ENCODE measurements at regions of chr3 and their contacts with region 1.

Region 1: DNA sequence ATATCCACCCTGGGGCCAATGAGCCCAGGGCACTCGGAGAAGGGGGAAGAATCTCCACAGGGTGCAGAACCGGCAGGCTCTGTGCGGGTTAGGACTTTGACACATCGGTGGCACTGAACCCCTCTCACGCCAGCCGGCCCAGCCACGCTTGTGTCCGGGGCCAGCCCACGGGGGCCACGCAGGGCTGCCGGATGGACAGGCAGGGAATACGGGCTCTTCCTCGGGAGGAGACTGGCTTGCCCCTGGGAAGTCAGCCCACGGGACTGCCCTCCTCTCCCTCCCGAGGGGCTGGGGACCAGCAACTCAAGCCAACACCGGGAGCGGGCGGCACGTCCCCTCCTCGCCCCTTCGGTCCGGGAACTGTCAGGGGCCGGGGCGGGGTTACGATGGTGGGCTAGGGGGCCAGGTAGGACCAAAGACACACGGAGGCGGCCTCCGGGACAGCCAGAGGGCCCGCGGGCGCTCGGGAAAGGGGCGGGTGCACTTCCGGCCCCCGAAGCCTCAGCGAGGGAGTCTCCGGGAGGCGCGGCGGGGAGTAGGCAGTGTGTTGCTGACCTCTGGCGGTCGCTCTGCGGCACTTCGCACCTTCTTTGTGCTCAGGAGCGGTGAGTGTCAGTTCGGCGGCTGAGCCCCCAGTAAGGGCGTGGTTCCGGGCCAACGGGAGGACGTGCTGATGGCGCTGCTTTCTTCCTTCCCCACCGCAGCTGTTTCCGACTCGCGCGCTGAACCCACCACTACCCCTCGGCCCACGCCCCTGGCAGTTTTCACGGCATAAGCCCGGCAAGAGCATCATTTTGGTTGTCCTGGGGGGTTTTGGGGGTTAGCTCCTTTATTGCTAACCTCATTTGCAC is 5.1 kb upstream of the CYP8B1 start:
- DNase-seq: peak; percentile 93
- H3K4me3 ChIP-seq: peak overlapping the region; percentile 63 to 75 (median 68)
- H3K27ac ChIP-seq: peak overlapping the region; percentile 67 to 80 (median 79)
- H3K4me1 ChIP-seq: peaks cover 0 to 13% (median 8%) of the 10 kb centered on the region in 4 donors
- H3K27me3 ChIP-seq: no peaks in the 10 kb centered on the region
- CTCF ChIP-seq: peak; percentile 78 to 90 (median 86)
- EP300 ChIP-seq: no peak
- POLR2A ChIP-seq: no peak

Region 2: DNA sequence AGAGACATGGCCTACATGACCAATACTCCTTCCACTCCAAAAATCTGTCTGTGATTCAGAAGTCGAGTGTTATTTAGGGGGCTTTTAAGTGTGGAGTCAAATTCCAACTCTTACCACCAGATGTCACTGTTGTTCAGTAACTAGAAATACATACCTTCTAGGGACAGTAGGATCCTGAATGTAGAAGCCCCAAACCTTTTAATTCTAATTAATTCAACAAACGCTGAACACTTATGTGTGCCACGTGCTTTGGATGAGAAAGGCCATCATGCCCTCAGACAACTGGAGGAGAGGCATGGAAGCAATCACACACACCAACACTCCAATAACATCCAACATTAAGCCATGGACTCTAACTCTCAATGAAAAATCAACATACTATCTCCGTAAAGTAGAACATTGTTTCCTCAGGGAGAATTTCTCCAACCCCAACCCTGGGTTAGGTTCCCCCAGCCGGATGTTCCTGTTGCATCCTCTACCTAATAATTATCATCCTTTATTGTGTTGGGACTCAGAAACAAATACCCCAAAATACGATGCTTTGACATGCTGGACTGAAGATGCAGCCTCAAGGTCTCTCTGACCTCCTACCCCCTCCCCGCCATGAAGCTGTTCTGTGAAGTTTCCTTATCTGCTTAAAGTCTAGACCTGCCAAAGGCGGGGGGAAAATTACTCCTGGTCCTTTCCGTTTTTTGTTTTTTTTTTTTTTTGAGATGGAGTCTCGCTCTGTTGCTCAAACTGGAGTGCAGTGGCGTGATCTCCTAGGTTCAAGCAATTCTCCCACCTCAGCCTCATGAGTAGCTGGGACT is 99.7 kb before region 1 on chr3:
- intact Hi-C with region 1: loop called (anchors 1 kb)
- DNase-seq: no peak
- H3K4me3 ChIP-seq: no peak overlapping the region
- H3K27ac ChIP-seq: peak overlapping the region in 3 of 4 donors; percentile 37 to 70 (median 45)
- H3K4me1 ChIP-seq: peaks cover 0 to 16% (median 0%) of the 10 kb centered on the region in 4 donors
- H3K27me3 ChIP-seq: no peaks in the 10 kb centered on the region
- CTCF ChIP-seq: peak; percentile 47 to 81 (median 78)
- EP300 ChIP-seq: no peak
- POLR2A ChIP-seq: no peak

Region 3: GRCh38 chr3:42804106-42804830 is 76.6 kb before region 1 on chr3 and contains the start of gene HIGD1A:
- intact Hi-C with region 1: loop called (anchors 2 kb)
- DNase-seq: peak; percentile 98
- H3K4me3 ChIP-seq: peak within 1 kb of the TSS; percentile 69 to 80 (median 80)
- H3K27ac ChIP-seq: peak within 1 kb of the TSS; percentile 94 to 99 (median 96)
- H3K4me1 ChIP-seq: peaks cover 0 to 45% (median 33%) of the 10 kb centered on the region in 4 donors
- H3K27me3 ChIP-seq: no peaks in the 10 kb centered on the region
- CTCF ChIP-seq: no peak
- EP300 ChIP-seq: no peak
- POLR2A ChIP-seq: peak; percentile 96 to 97
- total RNA-seq, gene HIGD1A: 127 to 272 (median 176) TPM

Region 4: DNA sequence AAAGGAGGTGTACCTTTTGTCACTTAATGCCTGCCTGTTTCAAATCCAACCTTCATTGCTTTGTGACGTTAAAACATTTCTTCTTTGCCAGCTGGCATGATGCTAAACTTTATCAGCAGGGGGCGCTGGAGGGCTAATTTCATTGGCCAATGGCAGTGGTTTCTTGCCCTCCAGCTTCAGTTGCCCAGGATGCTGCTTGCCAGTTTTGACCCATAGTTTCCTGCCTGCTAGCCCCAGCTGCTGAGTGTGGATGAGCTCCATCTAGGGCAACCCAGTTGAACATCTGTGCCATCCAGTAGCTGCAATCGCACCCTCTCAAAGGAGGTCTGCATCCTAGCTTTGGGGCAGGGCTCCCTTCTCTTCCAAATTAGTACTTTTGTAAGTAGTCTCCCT is 49.5 kb before region 1 on chr3:
- intact Hi-C with region 1: loop called (anchors 2 kb)
- DNase-seq: peak; percentile 79
- H3K4me3 ChIP-seq: no peak overlapping the region
- H3K27ac ChIP-seq: no peak overlapping the region
- H3K4me1 ChIP-seq: no peaks in the 10 kb centered on the region
- H3K27me3 ChIP-seq: no peaks in the 10 kb centered on the region
- CTCF ChIP-seq: peak; percentile 19 to 69 (median 58)
- EP300 ChIP-seq: no peak
- POLR2A ChIP-seq: no peak

Region 5: GRCh38 chr3:42839616-42840015 is 41.2 kb before region 1 on chr3:
- intact Hi-C with region 1: loop called (anchors 2 kb)
- DNase-seq: peak; percentile 73
- H3K4me3 ChIP-seq: peak overlapping the region in 1 of 4 donors; percentile 19
- H3K27ac ChIP-seq: no peak overlapping the region
- H3K4me1 ChIP-seq: peaks cover 0 to 14% (median 8%) of the 10 kb centered on the region in 4 donors
- H3K27me3 ChIP-seq: no peaks in the 10 kb centered on the region
- CTCF ChIP-seq: peak; percentile 81 to 93 (median 93)
- EP300 ChIP-seq: no peak
- POLR2A ChIP-seq: no peak